Right ventricle myocardium superior (tissue), 1 donor: ENCODE measurements at regions of chr1 and their contacts with region 1.

Region 1: GRCh38 chr1:226121587-226122400 is 59.3 kb downstream of the H3-3A start:
- DNase-seq: peak; percentile 80
- ATAC-seq: peak; percentile 93

Region 2: DNA sequence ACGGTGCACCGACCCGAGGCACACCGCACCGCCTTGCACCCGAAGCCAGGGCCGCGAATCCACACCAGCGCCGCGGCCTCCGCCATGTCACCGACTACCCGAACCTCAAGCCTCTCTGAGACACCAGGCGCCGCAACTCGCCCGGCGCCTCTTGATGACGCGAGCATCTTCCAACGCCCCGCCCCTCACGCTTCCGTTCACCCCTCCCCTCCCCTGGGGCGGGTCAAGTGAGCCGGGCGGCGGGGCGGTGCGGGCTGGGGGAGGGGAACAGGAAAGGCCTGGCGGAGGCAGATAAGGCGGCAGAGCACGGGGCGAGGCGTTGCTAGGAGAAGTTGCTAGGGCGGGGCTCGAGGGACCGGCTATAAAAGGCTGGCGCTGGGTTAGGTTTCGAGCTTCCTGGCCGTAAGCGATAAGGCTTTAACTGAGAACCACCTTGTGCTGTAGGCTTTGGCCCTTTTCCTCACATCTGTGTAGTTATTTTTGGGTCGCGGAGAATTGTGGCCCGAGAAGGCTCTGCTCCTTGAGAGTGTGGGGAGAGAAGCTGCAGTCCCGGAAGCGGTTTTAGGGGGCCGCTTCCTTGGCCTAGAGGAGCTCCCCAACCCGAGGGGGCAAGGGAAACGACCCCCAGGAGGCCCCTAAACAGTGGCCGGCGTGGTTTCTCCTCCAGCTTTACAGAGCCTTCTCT is 122.4 kb before region 1 on chr1 and contains the start of gene SDE2:
- intact Hi-C with region 1: loop called (anchors 10 kb)
- DNase-seq: peak; percentile 100
- ATAC-seq: peak; percentile 98
- total RNA-seq, gene SDE2: 9.4 TPM

Region 3: DNA sequence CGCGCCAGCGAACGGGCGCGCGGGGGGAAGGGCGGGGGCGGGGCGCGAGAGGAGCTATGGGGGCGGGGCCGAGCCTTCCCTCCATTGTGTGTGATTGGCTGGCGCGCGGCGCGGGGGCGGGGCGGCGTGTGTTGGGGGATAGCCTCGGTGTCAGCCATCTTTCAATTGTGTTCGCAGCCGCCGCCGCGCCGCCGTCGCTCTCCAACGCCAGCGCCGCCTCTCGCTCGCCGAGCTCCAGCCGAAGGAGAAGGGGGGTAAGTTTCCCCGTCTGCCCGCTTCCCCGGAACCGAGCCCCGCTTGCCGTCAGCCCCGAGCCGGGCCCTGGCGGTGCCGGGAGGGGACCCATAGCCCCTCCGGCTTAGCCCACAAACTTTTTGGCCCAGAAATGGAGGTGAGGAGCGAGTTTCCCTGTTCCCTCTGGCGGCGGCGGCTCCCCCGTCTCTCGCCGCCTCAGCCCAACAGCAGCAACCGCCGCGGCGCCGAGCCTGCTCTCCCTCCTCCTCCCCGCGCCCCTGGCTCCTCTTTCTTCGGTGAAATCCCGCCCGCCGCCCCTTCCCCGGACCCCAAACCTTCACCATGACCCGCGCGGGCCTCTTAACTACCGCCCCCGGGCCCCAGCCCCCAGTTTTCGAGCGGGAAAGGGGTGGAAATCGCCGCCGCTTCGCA is 59.1 kb before region 1 on chr1 and contains the start of gene H3-3A:
- intact Hi-C with region 1: loop called (anchors 5 kb)
- DNase-seq: peak; percentile 100
- ATAC-seq: peak; percentile 92
- total RNA-seq, gene H3-3A: 271 TPM

Region 4: DNA sequence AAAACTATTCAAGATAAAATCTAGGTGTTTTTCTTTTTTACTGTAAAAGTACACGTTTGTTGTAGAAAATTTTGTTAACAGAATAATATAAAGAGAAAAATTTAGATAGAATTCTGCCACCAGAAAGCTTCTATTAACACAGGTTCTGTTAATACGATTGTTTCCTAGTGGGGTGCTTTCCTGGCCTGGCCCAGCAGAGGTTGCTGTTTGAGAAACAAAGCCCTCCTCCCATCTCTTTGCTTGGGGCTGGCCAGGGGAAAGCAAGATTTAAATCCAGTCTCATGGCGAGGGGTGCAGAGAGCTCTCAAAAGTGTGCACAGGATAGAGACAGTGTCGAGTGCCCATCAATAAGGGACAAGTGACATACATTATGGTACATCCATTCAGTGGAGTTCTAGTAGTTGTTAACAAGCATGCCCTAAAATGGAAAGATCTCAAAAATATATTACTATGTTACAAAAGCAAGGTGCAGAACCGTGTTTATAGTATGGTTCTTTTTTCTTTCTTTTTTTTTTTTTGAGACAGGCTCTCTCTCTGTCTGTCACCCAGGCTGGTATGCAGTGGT is 79.3 kb after region 1 on chr1:
- intact Hi-C with region 1: loop called (anchors 2 kb)
- DNase-seq: no peak
- ATAC-seq: no peak

Region 5: DNA sequence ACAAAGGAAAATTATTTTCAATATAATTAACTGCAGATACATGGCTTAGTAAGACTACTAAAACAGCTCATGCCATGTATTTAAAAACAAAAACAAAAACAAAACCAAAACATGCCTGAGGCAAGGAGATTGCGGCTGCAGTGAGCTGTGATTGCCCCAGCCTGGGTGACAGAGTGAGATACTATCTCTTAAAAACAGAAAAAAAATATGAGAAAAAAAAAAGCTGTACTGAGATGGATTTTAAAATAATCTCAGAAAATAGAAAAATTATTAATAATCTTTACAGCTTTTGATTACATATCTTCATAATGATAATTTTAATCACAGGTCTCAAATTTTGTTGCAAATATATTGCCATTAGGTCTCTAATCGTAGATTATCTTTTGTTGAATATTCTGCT is 211.2 kb after region 1 on chr1:
- intact Hi-C with region 1: loop called (anchors 10 kb)
- DNase-seq: no peak
- ATAC-seq: no peak